Natural killer cell (primary cell): ENCODE measurements at regions of chr3 and their contacts with region 1.

Region 1: DNA sequence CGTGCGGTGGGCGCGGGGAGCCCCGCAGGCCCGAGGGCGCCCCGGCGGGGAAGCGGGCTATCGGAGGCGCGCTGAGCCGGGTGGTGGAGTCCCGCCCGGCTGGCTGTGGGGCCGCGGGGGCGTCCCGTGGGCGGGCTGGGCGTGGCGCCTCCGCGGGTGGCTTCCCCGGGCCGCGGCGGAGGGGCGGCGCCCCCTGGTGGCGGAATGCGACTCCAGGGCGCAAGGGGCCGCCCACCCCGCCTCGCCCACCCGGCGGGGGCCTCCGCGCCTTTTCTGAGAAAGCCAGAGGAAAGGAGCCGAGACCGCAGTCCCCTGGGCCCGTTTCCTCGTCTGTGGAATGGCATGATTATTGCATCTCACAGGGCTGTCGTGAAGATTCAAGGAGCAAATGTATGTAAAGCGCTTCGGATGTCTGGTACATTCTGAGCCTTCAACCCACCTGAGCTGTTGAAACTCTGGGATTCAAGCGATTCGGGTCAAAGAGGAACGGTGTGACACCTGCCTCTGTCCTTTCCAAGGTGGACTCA is 31.9 kb upstream of the RAB6B start:
- DNase-seq: peak; percentile 71 to 89
- ATAC-seq: peak; percentile 92 to 99 (median 97)
- H3K4me3 ChIP-seq: peak overlapping the region; percentile 41
- H3K4me3 Mint-ChIP-seq: peak overlapping the region; percentile 81
- H3K27ac ChIP-seq: no peak overlapping the region
- H3K27ac Mint-ChIP-seq: peak overlapping the region in 1 of 2 donors; percentile 52
- H3K4me1 ChIP-seq: peaks cover 10% of the 10 kb centered on the region
- H3K4me1 Mint-ChIP-seq: peaks cover 5 to 17% of the 10 kb centered on the region in 2 donors
- H3K27me3 ChIP-seq: no peaks in the 10 kb centered on the region
- H3K27me3 Mint-ChIP-seq: peaks cover 18 to 19% of the 10 kb centered on the region in 2 donors
- CTCF ChIP-seq: peak; percentile 66

Region 2: GRCh38 chr3:133815386-133815785 is 112.2 kb before region 1 on chr3:
- intact Hi-C with region 1: loop called (anchors 5 kb)
- DNase-seq: no peak
- ATAC-seq: no peak
- H3K4me3 ChIP-seq: no peak overlapping the region
- H3K4me3 Mint-ChIP-seq: no peak overlapping the region
- H3K27ac ChIP-seq: no peak overlapping the region
- H3K27ac Mint-ChIP-seq: no peak overlapping the region
- H3K4me1 ChIP-seq: no peaks in the 10 kb centered on the region
- H3K4me1 Mint-ChIP-seq: peaks cover 6 to 11% of the 10 kb centered on the region in 2 donors
- H3K27me3 ChIP-seq: no peaks in the 10 kb centered on the region
- H3K27me3 Mint-ChIP-seq: no peaks in the 10 kb centered on the region
- CTCF ChIP-seq: no peak